ENCODE measurements at regions of chr5 and their contacts with region 1.

Region 1: DNA sequence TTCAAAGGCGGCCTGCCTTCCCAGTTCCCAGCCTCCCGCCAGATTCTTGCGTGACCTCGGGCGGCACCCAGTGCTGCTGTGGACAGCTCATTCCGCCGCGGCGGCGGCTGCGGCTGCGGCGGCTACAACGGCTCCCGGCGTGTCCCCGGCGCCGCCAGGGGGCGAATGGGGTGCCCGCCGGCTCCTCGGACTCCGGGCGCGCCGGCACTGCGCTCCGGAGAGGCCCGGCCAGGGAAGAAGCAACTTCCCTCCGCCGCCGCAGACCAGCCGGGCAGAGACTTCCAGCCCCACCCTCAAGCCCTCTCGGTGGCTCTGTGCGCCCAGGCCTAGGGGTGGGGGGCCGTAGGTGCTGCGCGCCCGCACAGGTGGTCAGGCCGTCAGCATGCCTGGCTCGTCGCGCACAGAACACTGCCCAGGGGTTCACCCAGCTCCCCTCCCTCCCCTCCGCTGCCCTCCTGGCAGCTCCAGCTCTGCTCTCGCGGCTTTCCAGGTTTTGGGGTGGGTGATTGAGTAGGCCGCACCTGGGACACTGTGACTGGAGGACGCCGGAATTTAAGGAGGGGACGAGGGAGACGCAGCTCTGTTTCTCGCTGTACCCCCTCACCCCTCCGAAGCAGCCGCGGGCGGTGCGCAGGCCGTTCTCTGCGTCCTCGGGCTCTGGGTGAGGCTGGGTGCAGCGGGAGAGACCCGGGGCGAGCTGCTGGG is 20.2 kb downstream of the IGIP start:
- DNase-seq: peak; percentile 40 to 59
- ATAC-seq: peak; percentile 74 to 79
- H3K4me3 ChIP-seq: peak overlapping the region; percentile 51 to 79 (median 56)
- H3K27ac ChIP-seq: no peak overlapping the region
- H3K4me1 ChIP-seq: peaks cover 14 to 23% of the 10 kb centered on the region in 2 donors
- H3K27me3 ChIP-seq: no peaks in the 10 kb centered on the region
- CTCF ChIP-seq: peak; percentile 73 to 89 (median 88)
- POLR2A ChIP-seq: no peak

Region 2: DNA sequence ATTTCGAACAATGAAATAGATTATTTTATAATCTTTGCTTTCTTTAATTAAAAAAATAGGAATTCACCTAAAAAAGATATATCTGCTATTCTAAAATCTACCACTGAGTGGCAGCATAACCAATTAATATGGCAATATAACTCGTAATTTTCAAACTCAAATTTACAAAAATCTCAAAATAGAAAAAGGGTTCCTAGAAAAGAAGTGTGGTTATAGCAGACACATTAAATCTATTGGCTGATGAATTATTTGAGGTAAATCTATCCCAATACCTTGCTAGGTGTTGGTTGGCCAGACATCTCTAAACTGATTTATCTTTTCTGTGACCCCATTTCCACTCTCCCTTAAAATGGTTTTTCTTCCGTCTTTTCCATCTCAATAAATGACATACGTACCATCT is 72.7 kb before region 1 on chr5:
- in situ Hi-C with region 1: no loop called
- intact Hi-C with region 1: loop called (anchors 2 kb)
- DNase-seq: no peak
- ATAC-seq: peak in 1 of 2 donors; percentile 16
- H3K4me3 ChIP-seq: no peak overlapping the region
- H3K27ac ChIP-seq: no peak overlapping the region
- H3K4me1 ChIP-seq: no peaks in the 10 kb centered on the region
- H3K27me3 ChIP-seq: no peaks in the 10 kb centered on the region
- CTCF ChIP-seq: peak; percentile 53 to 74 (median 64)
- POLR2A ChIP-seq: no peak

Region 3: DNA sequence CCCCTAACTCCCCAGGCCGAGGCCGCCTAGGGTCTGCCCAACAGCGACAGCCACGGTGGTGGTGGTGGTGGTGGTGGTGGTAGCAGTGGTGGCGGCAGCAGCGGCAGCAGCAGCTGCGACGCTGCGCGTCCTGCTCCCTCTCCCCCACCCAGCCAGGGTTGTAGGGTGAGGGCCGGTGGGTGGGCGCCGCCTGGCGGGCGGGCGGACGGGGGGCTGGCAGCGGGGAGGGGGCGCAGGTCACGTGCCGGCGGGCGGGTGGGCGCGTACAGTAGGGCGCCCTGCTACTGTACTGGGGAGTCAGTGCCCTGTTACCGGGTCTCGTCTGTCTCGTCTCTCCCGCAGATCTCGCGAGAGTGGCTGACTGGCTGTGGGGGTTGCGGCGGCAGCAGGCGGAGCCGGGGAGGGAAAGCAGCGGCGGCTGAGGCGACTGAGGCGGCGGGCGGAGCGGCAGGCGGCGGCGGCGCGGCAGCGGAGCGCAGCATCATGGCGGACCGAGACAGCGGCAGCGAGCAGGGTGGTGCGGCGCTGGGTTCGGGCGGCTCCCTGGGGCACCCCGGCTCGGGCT is 32.2 kb before region 1 on chr5 and contains the start of gene PURA:
- in situ Hi-C with region 1: no loop called
- intact Hi-C with region 1: loop called (anchors 2 kb)
- DNase-seq: peak; percentile 91 to 94
- ATAC-seq: peak; percentile 94 to 95
- H3K4me3 ChIP-seq: peak within 1 kb of the TSS; percentile 78 to 91 (median 85)
- H3K27ac ChIP-seq: peak within 1 kb of the TSS; percentile 94 to 97 (median 95)
- H3K4me1 ChIP-seq: peaks cover 64 to 70% of the 10 kb centered on the region in 2 donors
- H3K27me3 ChIP-seq: no peaks in the 10 kb centered on the region
- CTCF ChIP-seq: peak in 2 of 5 experiments; percentile 11 to 37
- POLR2A ChIP-seq: peak; percentile 79 to 80
- total RNA-seq, gene PURA: 13.6 to 20.6 (median 16.5) TPM